Activated CD8-positive, alpha-beta memory T cell treated with anti-CD3 and anti-CD28 coated beads, Interleukin-2, amount 10 ng/mL, durations not matched to agents 7 days and 5 days (primary cell): ENCODE measurements at regions of chr13 and their contacts with region 1.

Region 1: DNA sequence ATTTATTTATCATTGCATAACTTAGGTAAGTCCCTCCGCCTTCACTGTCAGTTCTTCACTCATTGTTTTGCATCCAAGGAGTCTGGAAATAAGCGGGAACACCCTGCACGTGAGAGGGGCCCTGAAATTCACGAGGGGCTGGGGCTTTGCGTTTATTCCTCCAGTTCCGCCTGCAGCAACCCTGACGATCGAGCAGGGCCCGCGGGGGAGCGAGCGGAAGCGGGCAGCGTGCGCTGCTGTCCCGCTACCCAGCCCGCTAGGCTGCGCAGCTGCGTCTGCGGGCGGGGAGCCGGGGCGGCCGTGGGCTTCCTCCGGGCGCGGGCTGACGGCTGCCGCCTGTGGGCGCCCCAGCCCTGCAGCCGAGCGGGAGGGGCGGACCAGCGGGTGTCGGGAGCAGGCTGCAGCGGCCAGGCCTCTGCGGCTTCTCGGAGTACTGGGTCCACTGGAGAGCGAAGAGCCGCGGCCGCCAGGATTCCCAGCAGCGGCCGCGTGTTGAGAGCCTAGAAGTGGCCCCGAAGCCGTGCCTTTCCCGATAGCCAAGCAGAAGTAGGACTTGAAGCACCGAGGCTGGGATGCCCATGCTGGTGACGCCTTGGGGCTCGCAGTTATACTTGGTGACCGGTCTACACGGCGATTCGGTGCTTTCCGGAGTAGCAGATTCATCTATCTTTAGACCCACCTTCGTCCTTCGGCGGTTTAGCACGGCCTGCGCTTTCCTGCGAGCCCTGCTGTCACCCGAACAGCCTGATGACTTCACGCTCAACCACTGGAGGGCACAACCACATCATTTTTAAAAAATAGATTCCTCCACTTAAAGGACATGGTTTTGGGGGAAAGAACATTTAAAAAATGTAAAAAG is 32.9 kb upstream of the SACS start:
- DNase-seq: peak; percentile 76
- ATAC-seq: peak; percentile 92
- H3K4me3 Mint-ChIP-seq: peak overlapping the region; percentile 51
- H3K27ac Mint-ChIP-seq: no peak overlapping the region
- H3K4me1 Mint-ChIP-seq: peaks cover 8% of the 10 kb centered on the region
- H3K27me3 Mint-ChIP-seq: peaks cover 45% of the 10 kb centered on the region

Region 2: GRCh38 chr13:23899555-23899954 is 433.2 kb after region 1 on chr13:
- CTCF ChIA-PET with region 1: interaction called, 14 read pairs
- DNase-seq: peak; percentile 55
- ATAC-seq: peak; percentile 66
- H3K4me3 Mint-ChIP-seq: no peak overlapping the region
- H3K27ac Mint-ChIP-seq: no peak overlapping the region
- H3K4me1 Mint-ChIP-seq: peaks cover 14% of the 10 kb centered on the region
- H3K27me3 Mint-ChIP-seq: peaks cover 38% of the 10 kb centered on the region